ENCODE measurements at regions of chr7 and their contacts with region 1.

Region 1: GRCh38 chr7:151782598-151783448 is 94.1 kb downstream of the PRKAG2 start:
- DNase-seq: peak; percentile 50 to 89 (median 67)
- ATAC-seq: peak; percentile 86 to 94 (median 89)
- H3K4me3 ChIP-seq: peak overlapping the region in 2 of 4 donors; percentile 14 to 33
- H3K27ac ChIP-seq: no peak overlapping the region
- H3K4me1 ChIP-seq: no peaks in the 10 kb centered on the region
- H3K27me3 ChIP-seq: no peaks in the 10 kb centered on the region
- CTCF ChIP-seq: peak; percentile 80 to 90 (median 89)

Region 2: GRCh38 chr7:151925446-151926335 is 142.9 kb after region 1 on chr7:
- intact Hi-C with region 1: loop called in 2 of 3 experiments (anchors 10 kb)
- DNase-seq: peak in 4 of 6 donors; percentile 31 to 62 (median 48)
- ATAC-seq: peak; percentile 46 to 70 (median 56)
- H3K4me3 ChIP-seq: no peak overlapping the region
- H3K27ac ChIP-seq: peak overlapping the region in 3 of 4 donors; percentile 13 to 62 (median 45)
- H3K4me1 ChIP-seq: peaks cover 0 to 23% (median 15%) of the 10 kb centered on the region in 3 donors
- H3K27me3 ChIP-seq: no peaks in the 10 kb centered on the region
- CTCF ChIP-seq: no peak

Region 3: GRCh38 chr7:151964951-151965350 is 182.1 kb after region 1 on chr7:
- intact Hi-C with region 1: no loop called
- DNase-seq: no peak
- ATAC-seq: peak in 2 of 4 donors; percentile 46 to 57
- H3K4me3 ChIP-seq: no peak overlapping the region
- H3K27ac ChIP-seq: no peak overlapping the region
- H3K4me1 ChIP-seq: no peaks in the 10 kb centered on the region
- H3K27me3 ChIP-seq: no peaks in the 10 kb centered on the region
- CTCF ChIP-seq: no peak

Measured in pancreas (tissue), 10 donors.